ENCODE measurements at regions of chr12 and their contacts with region 1.

Region 1: DNA sequence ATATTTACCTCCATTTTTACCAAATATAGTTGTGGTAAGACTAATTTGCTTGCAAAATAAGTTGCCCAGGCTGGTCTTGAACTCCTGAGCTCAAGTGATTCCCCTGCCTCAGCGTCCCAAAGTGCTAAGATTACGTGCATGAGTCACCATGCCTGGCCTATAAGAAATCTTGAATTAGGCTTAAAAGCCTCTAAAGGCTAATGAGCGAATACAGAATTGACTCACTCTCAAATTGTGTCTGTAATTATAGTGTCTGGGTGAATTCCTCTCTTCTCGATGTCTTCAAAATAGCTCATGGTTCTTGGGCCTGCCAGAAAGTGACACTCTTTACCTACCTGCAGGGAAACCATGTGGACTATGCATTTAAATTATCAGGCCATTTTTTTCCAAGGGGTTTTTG is 403.5 kb downstream of the SLC16A7 start:
- DNase-seq: no peak

Region 2: DNA sequence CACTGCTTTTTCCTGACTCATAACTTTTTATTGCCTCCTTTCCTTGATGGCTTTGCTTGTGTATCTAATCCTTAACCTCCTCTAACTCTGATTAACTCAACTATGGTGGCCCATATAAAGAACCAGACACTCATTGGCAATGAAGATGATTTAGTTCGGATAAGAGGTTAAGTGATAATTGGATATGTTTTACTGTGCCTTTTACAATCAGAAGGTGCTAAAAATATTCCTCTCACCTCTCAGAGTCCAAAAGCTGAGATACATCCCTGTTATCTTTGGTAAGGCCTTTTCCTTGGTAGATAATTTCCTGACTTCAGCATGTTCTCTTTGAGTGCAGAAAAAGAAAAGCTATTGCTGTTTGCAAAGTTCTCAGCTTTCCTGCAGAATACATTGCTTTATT is 35.7 kb before region 1 on chr12:
- intact Hi-C with region 1: no loop called
- DNase-seq: no peak

Region 3: DNA sequence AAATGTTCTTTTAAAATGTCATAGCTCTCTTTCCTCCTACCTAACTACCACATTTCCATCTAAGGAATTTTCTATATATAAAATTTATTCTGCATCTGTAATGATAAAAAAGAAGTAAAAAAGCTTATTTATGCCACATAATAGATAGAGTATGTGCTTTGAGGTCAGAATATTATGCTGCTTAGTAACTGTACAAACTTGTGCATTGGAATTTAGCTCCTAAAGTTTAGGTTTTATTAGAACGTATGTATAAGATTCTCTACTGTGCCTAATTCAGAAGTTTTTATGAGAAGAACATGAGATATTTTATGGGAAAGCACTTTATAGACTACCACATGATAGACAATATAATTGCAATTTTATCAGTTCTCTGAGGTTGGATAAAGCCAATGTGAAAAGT is 18.8 kb before region 1 on chr12:
- intact Hi-C with region 1: loop called in 1 of 2 experiments (anchors 2 kb)
- DNase-seq: no peak

Region 4: DNA sequence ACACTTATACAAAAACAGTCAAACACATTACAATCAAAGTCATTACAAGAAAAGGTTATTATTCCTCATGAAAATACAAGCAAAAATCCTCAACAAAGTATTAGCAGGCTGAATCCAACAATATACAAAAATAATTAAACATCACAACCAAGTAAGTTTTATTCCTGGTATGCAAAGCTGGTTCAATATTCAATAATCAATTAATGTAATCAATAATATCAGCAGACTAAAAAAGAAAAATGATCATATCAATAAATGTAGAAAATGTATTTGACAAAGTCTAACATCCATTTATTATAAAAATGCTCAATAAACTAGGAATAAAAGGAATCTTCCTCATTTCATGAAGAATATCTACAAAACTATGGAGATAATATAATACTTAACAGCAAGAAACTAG is 372.2 kb after region 1 on chr12:
- intact Hi-C with region 1: loop called in 1 of 2 experiments (anchors 5 kb)
- DNase-seq: no peak